A549 (cell line): ENCODE measurements at regions of chr20 and their contacts with region 1.

Region 1: DNA sequence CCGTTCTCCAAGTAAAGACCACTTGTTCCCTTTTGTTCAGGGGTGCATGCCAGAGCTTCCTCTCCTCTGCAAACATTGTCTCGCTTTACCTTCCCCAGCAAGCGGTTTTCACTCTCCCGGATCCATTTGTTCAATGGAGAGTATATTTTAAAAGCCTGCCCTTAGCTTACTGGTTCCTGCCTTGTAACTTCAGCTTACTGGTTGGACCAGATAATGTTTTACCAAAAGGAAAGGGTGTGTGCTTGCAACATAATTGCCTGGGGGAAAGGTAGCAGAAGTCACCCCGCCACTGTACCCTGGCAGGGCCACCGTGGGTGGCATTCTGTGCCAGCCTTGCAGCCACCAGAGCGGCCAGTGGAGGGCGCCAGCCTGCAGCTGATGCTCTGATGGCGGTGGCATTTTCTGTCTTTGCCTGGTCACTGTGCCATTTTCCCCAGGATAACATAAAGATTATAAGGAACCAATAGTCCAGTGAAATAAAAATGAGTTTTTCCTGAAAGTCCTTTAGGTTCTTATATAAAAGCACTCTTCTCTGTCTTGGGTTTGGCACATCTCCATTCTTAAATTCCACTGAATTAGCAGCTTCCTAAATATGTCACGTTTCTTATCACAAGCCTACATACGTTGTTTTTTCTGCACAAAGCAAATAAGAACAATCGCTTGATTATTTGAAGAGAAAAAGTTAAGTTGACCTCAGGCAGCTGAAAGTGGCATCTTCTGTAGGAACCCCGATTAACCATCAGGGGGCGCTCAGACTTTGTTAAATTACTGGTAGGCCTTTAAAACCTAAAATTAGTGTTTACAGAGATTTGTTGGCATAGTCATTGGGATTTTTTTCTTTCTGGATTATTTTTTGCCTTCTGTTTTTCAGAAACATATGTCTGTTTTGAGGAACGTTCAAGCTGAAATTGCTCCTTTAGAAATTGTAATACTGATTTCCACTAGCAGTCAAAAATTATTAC is 67.4 kb upstream of the XRN2 start:
- DNase-seq: peak; percentile 50 to 78
- ATAC-seq: peak; percentile 90 to 92
- H3K4me3 ChIP-seq: no peak overlapping the region
- H3K27ac ChIP-seq: no peak overlapping the region
- H3K4me1 ChIP-seq: peaks cover 6% of the 10 kb centered on the region; the same call in 1 of the 3 replicates
- CTCF ChIP-seq: peak; percentile 98
- EP300 ChIP-seq: no peak
- POLR2A ChIP-seq: no peak
- RAD21 ChIP-seq: peak; percentile 78 to 85

Region 2: DNA sequence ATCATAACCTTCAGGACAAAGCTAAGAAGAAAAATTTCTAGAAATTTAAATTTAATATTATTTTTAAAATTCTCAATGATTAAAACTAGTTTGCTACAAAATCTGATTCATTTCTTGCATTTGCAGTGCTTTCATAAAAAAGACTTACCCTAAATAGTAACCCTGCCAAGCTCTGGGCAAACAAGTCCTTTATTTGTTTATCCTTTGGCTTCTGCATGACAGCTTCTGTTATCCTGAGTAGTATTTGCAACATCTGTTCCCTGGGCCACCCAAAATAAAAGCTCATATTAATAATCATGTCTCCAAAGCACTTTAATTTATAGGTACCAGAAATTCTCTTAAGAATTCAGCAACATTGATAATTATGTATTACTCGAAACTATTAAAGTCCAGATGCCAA is 624.6 kb before region 1 on chr20:
- CTCF ChIA-PET with region 1: no interaction called
- POLR2A ChIA-PET with region 1: no interaction called
- DNase-seq: no peak
- ATAC-seq: no peak
- H3K4me3 ChIP-seq: no peak overlapping the region
- H3K27ac ChIP-seq: no peak overlapping the region
- H3K4me1 ChIP-seq: no peaks in the 10 kb centered on the region
- CTCF ChIP-seq: no peak
- EP300 ChIP-seq: no peak
- POLR2A ChIP-seq: no peak
- RAD21 ChIP-seq: no peak

Region 3: GRCh38 chr20:20875716-20876115 is 360.0 kb before region 1 on chr20:
- CTCF ChIA-PET with region 1: interaction called, 12 read pairs
- POLR2A ChIA-PET with region 1: no interaction called
- DNase-seq: no peak
- ATAC-seq: no peak
- H3K4me3 ChIP-seq: no peak overlapping the region
- H3K27ac ChIP-seq: no peak overlapping the region
- H3K4me1 ChIP-seq: no peaks in the 10 kb centered on the region
- CTCF ChIP-seq: no peak
- EP300 ChIP-seq: no peak
- POLR2A ChIP-seq: no peak
- RAD21 ChIP-seq: no peak

Region 4: DNA sequence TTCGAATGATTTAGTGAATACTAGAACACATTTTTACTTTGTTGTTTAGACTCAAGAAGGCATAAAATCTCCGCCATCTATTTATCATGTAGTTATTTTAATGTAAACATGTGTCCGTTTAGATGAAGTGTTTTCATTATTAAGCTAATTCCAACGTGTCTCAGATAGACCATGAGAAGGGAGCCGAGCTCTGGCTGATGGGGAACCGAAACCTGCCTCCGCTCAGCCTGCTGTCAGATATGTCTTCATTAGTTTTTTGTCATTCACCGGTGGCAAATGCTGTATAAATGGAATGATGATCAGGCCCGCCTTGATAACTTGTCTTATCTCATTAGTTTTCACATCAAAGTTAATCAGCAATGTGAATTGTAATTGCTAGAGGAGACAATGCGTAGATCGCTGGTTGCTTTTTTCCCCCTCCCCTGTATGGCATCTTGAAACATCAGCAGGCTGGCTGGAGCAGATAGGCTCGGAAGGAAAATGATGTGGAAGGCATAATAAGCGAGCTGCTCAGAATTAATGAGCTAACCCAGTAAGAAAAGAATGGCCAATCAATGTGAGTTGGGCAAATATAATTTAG is 266.0 kb before region 1 on chr20:
- CTCF ChIA-PET with region 1: no interaction called
- POLR2A ChIA-PET with region 1: no interaction called
- DNase-seq: no peak
- ATAC-seq: no peak
- H3K4me3 ChIP-seq: no peak overlapping the region
- H3K27ac ChIP-seq: no peak overlapping the region
- H3K4me1 ChIP-seq: no peaks in the 10 kb centered on the region
- CTCF ChIP-seq: no peak
- EP300 ChIP-seq: no peak
- POLR2A ChIP-seq: no peak
- RAD21 ChIP-seq: no peak

Region 5: GRCh38 chr20:21214431-21214830 is 21.3 kb before region 1 on chr20:
- CTCF ChIA-PET with region 1: interaction called, 22 read pairs
- POLR2A ChIA-PET with region 1: no interaction called
- DNase-seq: no peak
- ATAC-seq: no peak
- H3K4me3 ChIP-seq: no peak overlapping the region
- H3K27ac ChIP-seq: no peak overlapping the region
- H3K4me1 ChIP-seq: no peaks in the 10 kb centered on the region
- CTCF ChIP-seq: no peak
- EP300 ChIP-seq: no peak
- POLR2A ChIP-seq: no peak
- RAD21 ChIP-seq: no peak

Region 6: GRCh38 chr20:21265261-21266190 is 29.8 kb after region 1 on chr20:
- CTCF ChIA-PET with region 1: interaction called, 36 read pairs
- POLR2A ChIA-PET with region 1: no interaction called
- DNase-seq: no peak
- ATAC-seq: no peak
- H3K4me3 ChIP-seq: no peak overlapping the region
- H3K27ac ChIP-seq: no peak overlapping the region
- H3K4me1 ChIP-seq: no peaks in the 10 kb centered on the region
- CTCF ChIP-seq: no peak
- EP300 ChIP-seq: no peak
- POLR2A ChIP-seq: no peak
- RAD21 ChIP-seq: no peak

Region 7: DNA sequence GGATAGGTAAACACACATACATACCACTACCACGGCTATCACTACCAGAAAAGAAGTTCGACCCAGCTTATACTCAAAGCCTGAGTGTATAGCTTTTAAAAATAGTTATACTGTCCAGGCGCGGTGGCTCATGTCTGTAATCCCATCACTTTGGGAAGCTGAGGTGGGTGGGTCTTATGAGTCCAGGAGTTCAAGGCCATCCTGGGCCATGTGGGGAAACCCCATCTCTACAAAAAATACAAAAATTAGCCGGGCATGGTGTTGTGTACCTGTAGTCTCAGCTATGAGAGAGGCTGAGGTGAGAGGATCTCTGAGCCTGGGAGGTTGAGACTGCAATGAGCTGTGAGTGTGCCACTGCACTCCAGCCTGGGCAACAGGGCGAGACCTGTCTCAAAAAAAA is 128.6 kb after region 1 on chr20:
- CTCF ChIA-PET with region 1: interaction called, 10 read pairs
- POLR2A ChIA-PET with region 1: no interaction called
- DNase-seq: no peak
- ATAC-seq: no peak; a peak in 1 of 6 replicates
- H3K4me3 ChIP-seq: no peak overlapping the region
- H3K27ac ChIP-seq: no peak overlapping the region
- H3K4me1 ChIP-seq: peaks cover 10% of the 10 kb centered on the region; the same call in 2 of the 3 replicates
- CTCF ChIP-seq: no peak
- EP300 ChIP-seq: no peak
- POLR2A ChIP-seq: no peak
- RAD21 ChIP-seq: no peak

Region 8: GRCh38 chr20:21520702-21521595 is 285.2 kb after region 1 on chr20:
- CTCF ChIA-PET with region 1: interaction called, 19 read pairs
- POLR2A ChIA-PET with region 1: no interaction called
- DNase-seq: no peak
- ATAC-seq: peak in 1 of 2 experiments; percentile 24; a peak in 2 of 6 replicates
- H3K4me3 ChIP-seq: no peak overlapping the region
- H3K27ac ChIP-seq: no peak overlapping the region
- H3K4me1 ChIP-seq: peaks cover 5% of the 10 kb centered on the region; the same call in 1 of the 3 replicates
- CTCF ChIP-seq: no peak
- EP300 ChIP-seq: no peak
- POLR2A ChIP-seq: no peak
- RAD21 ChIP-seq: peak in 1 of 2 experiments; percentile 17; a peak in 1 of 5 replicates

Region 9: GRCh38 chr20:21714297-21715192 is 478.8 kb after region 1 on chr20:
- CTCF ChIA-PET with region 1: no interaction called
- POLR2A ChIA-PET with region 1: no interaction called
- DNase-seq: no peak
- ATAC-seq: peak in 1 of 2 experiments; percentile 30; a peak in 3 of 6 replicates
- H3K4me3 ChIP-seq: no peak overlapping the region
- H3K27ac ChIP-seq: no peak overlapping the region
- H3K4me1 ChIP-seq: no peaks in the 10 kb centered on the region
- CTCF ChIP-seq: no peak
- EP300 ChIP-seq: no peak
- POLR2A ChIP-seq: no peak
- RAD21 ChIP-seq: no peak